Tibial artery (tissue), 4 donors: ENCODE measurements at regions of chr3 and their contacts with region 1.

Region 1: DNA sequence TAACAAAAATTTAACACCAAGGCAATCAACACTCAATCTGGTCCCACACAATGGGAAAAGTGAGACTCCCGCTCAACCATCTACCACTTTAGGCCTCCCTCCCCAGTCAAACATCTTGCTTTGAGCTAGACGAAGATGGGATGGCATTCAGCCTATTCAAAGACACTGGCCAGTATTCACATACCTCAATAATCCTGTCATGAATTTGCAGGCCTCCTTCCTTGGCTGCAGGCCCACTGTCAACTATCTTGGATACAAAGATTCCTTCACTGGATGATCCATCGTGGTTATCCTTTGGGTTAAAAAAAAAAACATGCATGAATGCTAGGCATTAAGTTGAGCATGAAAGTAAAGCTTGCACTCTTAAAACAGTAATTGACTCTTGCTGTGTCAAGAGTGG is 22.6 kb downstream of the PDZRN3 start:
- DNase-seq: no peak
- H3K4me3 ChIP-seq: no peak overlapping the region
- H3K27ac ChIP-seq: peak overlapping the region in 1 of 2 donors; percentile 38
- H3K4me1 ChIP-seq: peaks cover 0 to 94% (median 38%) of the 10 kb centered on the region in 4 donors
- H3K27me3 ChIP-seq: no peaks in the 10 kb centered on the region
- CTCF ChIP-seq: no peak

Region 2: DNA sequence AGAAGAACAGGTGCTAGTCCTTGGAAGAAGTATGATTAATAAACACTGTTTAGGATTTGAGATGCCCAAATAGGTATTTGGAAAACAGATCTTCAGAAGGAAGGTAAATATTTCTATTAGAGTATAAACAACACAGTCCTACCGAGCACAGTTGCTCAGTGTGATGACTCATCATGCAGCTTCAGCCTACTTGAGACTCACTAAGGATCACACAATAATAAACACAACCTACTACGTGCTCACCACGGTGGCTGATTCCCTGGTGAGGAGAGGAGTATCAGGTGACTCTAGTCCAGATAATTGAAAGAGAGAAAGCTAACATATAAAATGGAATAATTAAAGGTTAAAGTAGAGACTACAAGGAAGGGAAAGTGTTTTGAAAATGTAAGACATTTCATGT is 49.5 kb before region 1 on chr3:
- intact Hi-C with region 1: no loop called
- DNase-seq: no peak
- H3K4me3 ChIP-seq: no peak overlapping the region
- H3K27ac ChIP-seq: peak overlapping the region in 1 of 2 donors; percentile 8
- H3K4me1 ChIP-seq: peaks cover 0 to 51% (median 13%) of the 10 kb centered on the region in 4 donors
- H3K27me3 ChIP-seq: no peaks in the 10 kb centered on the region
- CTCF ChIP-seq: no peak

Region 3: GRCh38 chr3:73582535-73582934 is 19.6 kb before region 1 on chr3:
- intact Hi-C with region 1: loop called (anchors 1 kb)
- DNase-seq: no peak
- H3K4me3 ChIP-seq: no peak overlapping the region
- H3K27ac ChIP-seq: no peak overlapping the region
- H3K4me1 ChIP-seq: peaks cover 0 to 64% (median 23%) of the 10 kb centered on the region in 4 donors
- H3K27me3 ChIP-seq: no peaks in the 10 kb centered on the region
- CTCF ChIP-seq: no peak

Region 4: DNA sequence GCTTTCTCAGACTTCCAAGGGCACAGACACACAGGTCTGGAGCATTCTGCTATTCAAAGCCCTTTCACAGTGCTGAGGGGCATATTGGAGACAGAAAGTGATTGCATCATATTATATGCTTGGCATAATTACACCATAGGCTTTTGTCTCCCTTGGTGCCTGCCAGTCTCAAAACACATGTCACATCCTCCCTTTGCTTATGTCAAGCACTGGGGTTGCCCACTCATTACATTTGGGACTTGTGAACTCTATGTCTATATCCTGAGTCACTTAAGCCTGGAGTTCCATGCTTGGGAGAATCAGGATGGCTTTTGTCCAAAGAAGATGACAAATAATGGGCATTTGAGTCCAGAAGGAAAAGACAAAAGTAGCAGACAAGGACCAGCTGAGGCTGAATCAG is 34.9 kb after region 1 on chr3:
- intact Hi-C with region 1: no loop called
- DNase-seq: no peak
- H3K4me3 ChIP-seq: no peak overlapping the region
- H3K27ac ChIP-seq: peak overlapping the region; percentile 39 to 52
- H3K4me1 ChIP-seq: peaks cover 0 to 18% (median 14%) of the 10 kb centered on the region in 4 donors
- H3K27me3 ChIP-seq: no peaks in the 10 kb centered on the region
- CTCF ChIP-seq: no peak